HAP-1 (cell line): ENCODE measurements at regions of chr17 and their contacts with region 1.

Region 1: GRCh38 chr17:48016112-48016511 is 21.5 kb downstream of the COPZ2 start:
- DNase-seq: no peak
- H3K4me3 ChIP-seq: no peak overlapping the region
- H3K4me1 ChIP-seq: peaks cover 8% of the 10 kb centered on the region
- H3K27me3 ChIP-seq: no peaks in the 10 kb centered on the region

Region 2: GRCh38 chr17:47840740-47841603 is 175.1 kb before region 1 on chr17 and contains the start of gene SCRN2:
- in situ Hi-C with region 1: loop called (anchors 5 kb)
- DNase-seq: peak; percentile 83 to 95
- H3K4me3 ChIP-seq: peak within 1 kb of the TSS; percentile 56
- H3K4me1 ChIP-seq: peaks cover 8% of the 10 kb centered on the region
- H3K27me3 ChIP-seq: peaks cover 17% of the 10 kb centered on the region

Region 3: DNA sequence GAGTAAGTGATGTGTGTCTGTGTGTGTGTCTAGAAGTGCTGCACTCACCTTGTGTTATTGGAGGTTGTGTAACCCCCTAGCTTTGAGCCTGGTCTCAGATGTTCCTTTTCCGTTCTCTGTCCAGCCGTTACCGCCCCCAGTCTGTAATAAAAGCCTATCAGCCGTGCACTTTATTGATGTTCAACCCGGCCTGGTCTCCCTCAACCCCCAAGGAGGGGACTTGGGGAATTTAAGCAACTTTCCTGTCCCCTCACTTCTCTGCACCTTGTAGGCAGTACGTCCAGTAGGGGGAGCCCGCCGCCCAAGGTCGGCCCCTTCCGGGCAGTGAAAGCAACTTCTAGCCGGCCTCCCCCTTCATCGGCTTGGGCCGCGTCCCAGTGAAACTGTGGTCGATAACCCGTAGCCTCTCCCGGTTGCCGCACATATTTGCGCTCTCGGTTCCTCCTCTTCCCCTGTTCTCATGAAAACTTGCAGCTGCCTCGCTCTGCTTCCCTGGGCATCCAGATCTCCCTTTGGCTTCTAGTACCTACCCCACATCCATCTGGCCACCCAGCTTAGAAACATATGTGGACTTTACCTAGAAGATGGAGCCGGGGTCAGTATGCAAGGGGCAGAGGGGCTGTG is 66.9 kb before region 1 on chr17:
- in situ Hi-C with region 1: loop called (anchors 5 kb)
- DNase-seq: peak; percentile 57 to 94
- H3K4me3 ChIP-seq: no peak overlapping the region
- H3K4me1 ChIP-seq: peaks cover 5% of the 10 kb centered on the region
- H3K27me3 ChIP-seq: no peaks in the 10 kb centered on the region

Region 4: DNA sequence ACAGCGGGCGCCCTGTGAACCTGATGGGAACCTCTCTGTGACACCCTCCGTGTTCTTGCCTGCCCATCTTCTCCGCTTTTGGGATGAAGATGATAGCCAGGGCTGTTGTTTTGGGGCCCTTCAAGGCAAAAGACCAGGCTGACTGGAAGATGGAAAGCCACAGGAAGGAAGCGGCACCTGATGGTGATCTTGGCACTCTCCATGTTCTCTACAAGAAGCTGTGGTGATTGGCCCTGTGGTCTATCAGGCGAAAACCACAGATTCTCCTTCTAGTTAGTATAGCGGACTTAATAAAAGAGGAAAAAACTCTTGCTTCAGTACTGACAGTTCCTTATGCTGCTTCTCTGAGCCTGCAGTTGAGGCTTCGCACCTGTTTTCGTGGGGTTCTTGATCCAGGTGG is 34.6 kb before region 1 on chr17:
- in situ Hi-C with region 1: loop called (anchors 5 kb)
- DNase-seq: no peak
- H3K4me3 ChIP-seq: no peak overlapping the region
- H3K4me1 ChIP-seq: no peaks in the 10 kb centered on the region
- H3K27me3 ChIP-seq: no peaks in the 10 kb centered on the region